ENCODE measurements at regions of chr1 and their contacts with region 1.

Region 1: GRCh38 chr1:39098546-39099250 is 72.5 kb downstream of the NDUFS5 start:
- DNase-seq: peak; percentile 85
- ATAC-seq: peak; percentile 34
- H3K4me3 ChIP-seq: no peak overlapping the region
- H3K4me3 Mint-ChIP-seq: no peak overlapping the region
- H3K27ac ChIP-seq: no peak overlapping the region
- H3K27ac Mint-ChIP-seq: peak overlapping the region; percentile 6
- H3K4me1 ChIP-seq: peaks cover 17 to 23% of the 10 kb centered on the region in 2 donors
- H3K4me1 Mint-ChIP-seq: peaks cover 22% of the 10 kb centered on the region
- H3K27me3 ChIP-seq: no peaks in the 10 kb centered on the region
- H3K27me3 Mint-ChIP-seq: no peaks in the 10 kb centered on the region
- CTCF ChIP-seq: peak; percentile 79

Region 2: DNA sequence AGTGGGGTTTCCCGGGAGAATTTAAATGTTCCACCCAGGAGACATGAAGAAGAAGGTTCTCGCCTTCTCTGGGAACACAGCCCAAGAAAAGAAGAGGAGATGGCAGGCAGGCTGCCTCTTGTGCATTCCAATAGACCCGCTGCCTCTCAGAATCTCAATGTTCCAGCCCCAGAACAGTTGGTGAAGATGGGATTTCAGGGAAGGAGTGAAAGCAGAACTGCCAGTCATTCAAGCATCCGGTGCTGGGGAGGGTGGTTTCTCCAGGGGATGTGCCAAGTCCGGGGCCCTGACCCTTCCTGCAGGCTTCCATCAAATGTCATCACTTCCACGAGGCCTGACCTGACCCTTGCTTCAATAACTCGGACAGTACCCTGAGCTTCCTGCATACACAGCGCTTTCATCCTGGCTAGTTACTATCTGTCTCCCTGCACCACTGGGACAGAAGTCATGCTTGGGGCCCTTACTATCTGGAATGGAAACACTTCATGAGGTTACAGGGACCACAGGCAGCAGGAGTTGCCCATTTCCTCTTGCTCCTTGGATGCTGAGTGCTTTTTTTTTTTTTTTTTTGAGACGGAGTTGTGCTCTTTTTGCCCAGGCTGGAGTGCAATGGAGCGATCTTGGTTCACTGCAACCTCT is 665.5 kb before region 1 on chr1:
- CTCF ChIA-PET with region 1: no interaction called
- POLR2A ChIA-PET with region 1: no interaction called
- intact Hi-C with region 1: no loop called
- DNase-seq: no peak
- ATAC-seq: no peak
- H3K4me3 ChIP-seq: no peak overlapping the region
- H3K4me3 Mint-ChIP-seq: no peak overlapping the region
- H3K27ac ChIP-seq: no peak overlapping the region
- H3K27ac Mint-ChIP-seq: no peak overlapping the region
- H3K4me1 ChIP-seq: peaks cover 0 to 3% of the 10 kb centered on the region in 2 donors
- H3K4me1 Mint-ChIP-seq: peaks cover 10% of the 10 kb centered on the region
- H3K27me3 ChIP-seq: no peaks in the 10 kb centered on the region
- H3K27me3 Mint-ChIP-seq: peaks cover 8% of the 10 kb centered on the region
- CTCF ChIP-seq: no peak

Region 3: DNA sequence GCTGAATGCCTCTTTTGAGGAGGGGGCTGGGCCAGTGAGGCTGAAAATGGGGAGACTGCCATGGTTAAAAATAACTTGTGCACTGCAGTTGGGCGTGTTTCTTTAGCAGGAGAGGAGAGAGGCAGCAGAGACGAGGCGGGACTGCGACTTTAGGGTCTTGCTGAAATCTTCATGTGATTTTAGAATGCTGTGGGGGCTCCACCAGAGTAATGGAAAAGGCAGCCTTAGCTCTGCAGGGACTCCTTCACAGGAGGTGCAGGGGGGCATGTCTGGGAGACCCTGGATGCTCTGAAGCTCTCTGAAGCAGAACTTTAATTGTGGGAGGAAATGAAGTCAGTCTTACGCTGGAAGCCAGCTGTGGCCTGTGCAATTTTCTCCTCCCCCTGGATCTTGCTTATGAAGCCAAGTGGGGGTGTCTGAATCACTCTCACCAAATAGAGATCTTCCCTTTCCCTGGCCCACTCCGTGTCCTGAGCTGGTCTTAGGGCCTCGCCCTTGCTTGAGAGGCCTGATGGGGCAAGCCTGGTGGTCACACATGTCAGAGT is 11.8 kb before region 1 on chr1:
- CTCF ChIA-PET with region 1: interaction called, 11 read pairs
- POLR2A ChIA-PET with region 1: no interaction called
- intact Hi-C with region 1: no loop called
- DNase-seq: no peak
- ATAC-seq: no peak
- H3K4me3 ChIP-seq: no peak overlapping the region
- H3K4me3 Mint-ChIP-seq: no peak overlapping the region
- H3K27ac ChIP-seq: no peak overlapping the region
- H3K27ac Mint-ChIP-seq: no peak overlapping the region
- H3K4me1 ChIP-seq: peaks cover 5% of the 10 kb centered on the region in 2 donors
- H3K4me1 Mint-ChIP-seq: peaks cover 12% of the 10 kb centered on the region
- H3K27me3 ChIP-seq: peaks cover 0 to 18% (median 17%) of the 10 kb centered on the region in 4 experiments
- H3K27me3 Mint-ChIP-seq: peaks cover 21% of the 10 kb centered on the region
- CTCF ChIP-seq: no peak

Region 4: GRCh38 chr1:39189592-39190041 is 90.9 kb after region 1 on chr1:
- CTCF ChIA-PET with region 1: interaction called, 203 read pairs
- POLR2A ChIA-PET with region 1: interaction called, 18 read pairs
- intact Hi-C with region 1: loop called (anchors 1 kb)
- DNase-seq: no peak
- ATAC-seq: no peak
- H3K4me3 ChIP-seq: no peak overlapping the region
- H3K4me3 Mint-ChIP-seq: no peak overlapping the region
- H3K27ac ChIP-seq: no peak overlapping the region
- H3K27ac Mint-ChIP-seq: no peak overlapping the region
- H3K4me1 ChIP-seq: peaks cover 18 to 27% of the 10 kb centered on the region in 2 donors
- H3K4me1 Mint-ChIP-seq: peaks cover 34% of the 10 kb centered on the region
- H3K27me3 ChIP-seq: no peaks in the 10 kb centered on the region
- H3K27me3 Mint-ChIP-seq: no peaks in the 10 kb centered on the region
- CTCF ChIP-seq: no peak

Region 5: DNA sequence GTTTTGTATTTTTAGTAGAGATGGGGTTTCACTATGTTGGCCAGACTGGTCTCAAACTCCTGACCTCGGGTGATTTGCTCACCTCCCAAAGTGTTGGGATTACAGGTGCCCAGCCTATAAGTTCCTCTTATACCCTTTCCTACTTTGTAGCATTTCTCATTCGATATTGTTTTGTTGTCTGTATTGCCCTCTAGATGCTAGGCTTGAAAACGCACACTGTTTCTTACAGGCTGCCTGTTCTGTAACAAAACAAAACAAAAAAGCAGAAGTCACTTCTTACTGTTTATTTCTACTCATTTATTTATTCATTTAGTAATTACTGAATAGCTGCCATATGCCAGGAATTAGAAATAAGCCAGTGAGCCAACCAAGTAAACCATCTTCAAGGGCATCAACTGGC is 255.9 kb after region 1 on chr1:
- CTCF ChIA-PET with region 1: interaction called, 10 read pairs
- POLR2A ChIA-PET with region 1: no interaction called
- intact Hi-C with region 1: no loop called
- DNase-seq: peak; percentile 22
- ATAC-seq: no peak
- H3K4me3 ChIP-seq: no peak overlapping the region
- H3K4me3 Mint-ChIP-seq: no peak overlapping the region
- H3K27ac ChIP-seq: no peak overlapping the region
- H3K27ac Mint-ChIP-seq: peak overlapping the region; percentile 13
- H3K4me1 ChIP-seq: no peaks in the 10 kb centered on the region
- H3K4me1 Mint-ChIP-seq: no peaks in the 10 kb centered on the region
- H3K27me3 ChIP-seq: no peaks in the 10 kb centered on the region
- H3K27me3 Mint-ChIP-seq: no peaks in the 10 kb centered on the region
- CTCF ChIP-seq: no peak

Region 6: DNA sequence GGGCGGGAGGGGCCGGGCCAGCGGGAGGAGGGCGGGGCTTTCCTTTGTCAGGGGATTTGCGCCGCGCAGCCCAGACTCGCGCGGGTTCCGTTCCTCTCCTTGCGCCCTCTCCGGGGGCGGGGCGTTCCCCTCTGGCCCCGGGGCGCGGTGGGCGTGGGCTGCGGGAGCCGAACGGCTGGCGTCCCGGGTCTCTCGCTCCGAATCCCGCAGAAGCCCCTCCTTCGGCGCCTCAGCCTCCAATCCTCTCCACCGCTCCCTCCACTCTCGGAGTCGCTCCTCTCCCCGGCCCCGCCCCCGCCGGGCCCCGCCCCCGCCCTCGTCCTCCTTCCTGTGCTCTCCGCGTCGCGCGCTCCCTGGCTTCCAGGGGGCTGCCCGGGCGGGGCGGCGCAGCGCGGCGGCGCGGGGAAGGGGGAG is 309.9 kb after region 1 on chr1:
- CTCF ChIA-PET with region 1: interaction called, 8 read pairs
- POLR2A ChIA-PET with region 1: no interaction called
- intact Hi-C with region 1: loop called (anchors 5 kb)
- DNase-seq: peak; percentile 87
- ATAC-seq: peak; percentile 86
- H3K4me3 ChIP-seq: peak overlapping the region in 4 of 5 experiments; percentile 47 to 70 (median 64)
- H3K4me3 Mint-ChIP-seq: peak overlapping the region; percentile 90
- H3K27ac ChIP-seq: peak overlapping the region in 1 of 2 donors; percentile 54
- H3K27ac Mint-ChIP-seq: no peak overlapping the region
- H3K4me1 ChIP-seq: peaks cover 16 to 19% of the 10 kb centered on the region in 2 donors
- H3K4me1 Mint-ChIP-seq: peaks cover 30% of the 10 kb centered on the region
- H3K27me3 ChIP-seq: no peaks in the 10 kb centered on the region
- H3K27me3 Mint-ChIP-seq: no peaks in the 10 kb centered on the region
- CTCF ChIP-seq: no peak

Region 7: DNA sequence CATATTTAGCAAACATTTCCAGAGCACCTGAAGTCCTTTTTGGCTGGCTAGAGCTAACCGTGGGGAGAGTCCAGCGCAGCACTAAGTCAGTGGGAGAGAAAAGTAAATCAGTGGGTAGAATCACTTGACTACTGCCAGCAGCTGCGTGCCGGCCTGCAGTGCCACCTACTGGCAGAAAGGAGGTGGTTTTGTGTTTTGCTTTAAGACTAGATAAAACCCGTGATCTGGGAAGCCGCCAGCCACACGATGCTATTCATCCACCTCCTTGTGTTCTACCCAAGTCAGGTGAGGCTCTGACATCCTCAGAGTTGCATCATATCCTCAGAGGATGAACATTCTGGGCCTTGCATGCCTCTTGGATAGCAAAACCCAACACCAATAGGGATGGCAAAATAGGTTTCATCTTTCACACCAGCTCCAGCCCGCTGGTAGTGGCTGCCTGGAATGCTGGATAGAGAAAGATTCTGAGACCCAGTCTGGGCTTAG is 554.9 kb after region 1 on chr1:
- CTCF ChIA-PET with region 1: no interaction called
- POLR2A ChIA-PET with region 1: no interaction called
- intact Hi-C with region 1: loop called (anchors 2 kb)
- DNase-seq: peak; percentile 77
- ATAC-seq: peak; percentile 45
- H3K4me3 ChIP-seq: no peak overlapping the region
- H3K4me3 Mint-ChIP-seq: no peak overlapping the region
- H3K27ac ChIP-seq: no peak overlapping the region
- H3K27ac Mint-ChIP-seq: no peak overlapping the region
- H3K4me1 ChIP-seq: peaks cover 4 to 8% of the 10 kb centered on the region in 2 donors
- H3K4me1 Mint-ChIP-seq: peaks cover 4% of the 10 kb centered on the region
- H3K27me3 ChIP-seq: peaks cover 0 to 8% (median 6%) of the 10 kb centered on the region in 4 experiments
- H3K27me3 Mint-ChIP-seq: peaks cover 14% of the 10 kb centered on the region
- CTCF ChIP-seq: peak; percentile 91